PC-9 (cell line): ENCODE measurements at regions of chrX and their contacts with region 1.

Region 1: GRCh38 chrX:71378732-71379131 is 12.6 kb downstream of the TAF1 start:
- DNase-seq: no peak
- H3K4me3 ChIP-seq: no peak overlapping the region
- H3K27ac ChIP-seq: no peak overlapping the region
- H3K4me1 ChIP-seq: no peaks in the 10 kb centered on the region
- H3K27me3 ChIP-seq: no peaks in the 10 kb centered on the region
- CTCF ChIP-seq: no peak

Region 2: DNA sequence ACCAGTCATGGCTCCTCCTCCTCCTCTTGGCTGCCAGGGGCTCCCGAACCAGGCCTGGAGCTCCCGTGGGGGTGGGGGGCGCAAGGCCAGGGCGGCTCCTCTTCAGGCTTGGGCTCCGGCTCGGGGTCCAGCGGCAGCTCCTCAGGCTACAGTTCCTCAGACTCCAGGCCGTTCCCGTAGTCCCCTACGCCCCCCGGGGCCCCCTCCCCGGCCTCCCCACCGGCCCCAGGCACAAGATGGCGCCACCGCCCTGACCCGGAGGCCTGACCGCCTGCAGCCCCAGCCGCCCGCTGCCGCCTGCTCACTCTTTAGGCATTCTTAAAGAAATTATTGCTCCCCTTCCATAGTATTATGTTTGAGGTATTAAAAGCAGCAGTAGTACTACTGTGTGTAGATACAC is 42.0 kb after region 1 on chrX:
- CTCF ChIA-PET with region 1: no interaction called
- POLR2A ChIA-PET with region 1: interaction called, 10 read pairs
- intact Hi-C with region 1: no loop called
- DNase-seq: no peak
- H3K4me3 ChIP-seq: no peak overlapping the region
- H3K27ac ChIP-seq: no peak overlapping the region
- H3K4me1 ChIP-seq: no peaks in the 10 kb centered on the region
- H3K27me3 ChIP-seq: no peaks in the 10 kb centered on the region
- CTCF ChIP-seq: no peak